Gastrocnemius medialis (tissue), 4 donors: ENCODE measurements at regions of chr11 and their contacts with region 1.

Region 1: DNA sequence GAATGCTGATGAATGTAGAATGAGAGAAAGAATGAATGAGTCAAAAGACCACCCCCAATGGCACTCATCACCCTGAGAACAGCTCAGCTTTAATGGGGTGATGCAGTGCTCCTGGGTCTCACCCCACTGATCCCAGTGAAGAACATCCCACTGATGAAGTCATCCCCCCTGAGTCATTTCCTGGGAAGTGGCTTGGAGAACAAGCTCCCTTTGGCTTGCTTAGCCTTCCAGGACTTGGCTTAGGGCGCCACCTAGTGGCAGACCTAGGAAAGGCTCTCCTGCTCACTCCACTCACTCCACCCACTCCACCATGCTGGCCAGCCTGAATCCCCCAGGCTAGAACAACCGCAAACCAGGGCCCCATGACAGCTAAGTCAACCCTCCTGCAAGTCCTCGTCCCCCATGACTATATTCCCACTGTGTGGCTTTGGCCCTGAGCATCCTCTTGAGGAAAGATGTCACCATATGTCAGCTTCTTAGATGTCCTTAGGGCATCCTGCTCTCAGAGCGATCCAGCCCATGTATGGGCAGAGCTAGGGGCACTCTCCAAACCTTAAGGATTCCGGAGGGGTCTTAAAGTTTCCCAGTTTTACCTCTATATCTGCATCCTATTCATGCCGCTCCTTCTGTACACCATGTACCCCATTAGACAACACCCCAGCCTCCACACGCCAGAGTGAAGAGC is 17.8 kb upstream of the TMPRSS13 start:
- DNase-seq: peak; percentile 62 to 76
- ATAC-seq: peak; percentile 94 to 96
- H3K4me3 ChIP-seq: no peak overlapping the region
- H3K27ac ChIP-seq: no peak overlapping the region
- H3K4me1 ChIP-seq: peaks cover 0 to 2% of the 10 kb centered on the region in 2 donors
- H3K27me3 ChIP-seq: peaks cover 0 to 3% (median 0%) of the 10 kb centered on the region in 3 donors
- CTCF ChIP-seq: peak; percentile 88 to 97 (median 94)
- POLR2A ChIP-seq: no peak

Region 2: DNA sequence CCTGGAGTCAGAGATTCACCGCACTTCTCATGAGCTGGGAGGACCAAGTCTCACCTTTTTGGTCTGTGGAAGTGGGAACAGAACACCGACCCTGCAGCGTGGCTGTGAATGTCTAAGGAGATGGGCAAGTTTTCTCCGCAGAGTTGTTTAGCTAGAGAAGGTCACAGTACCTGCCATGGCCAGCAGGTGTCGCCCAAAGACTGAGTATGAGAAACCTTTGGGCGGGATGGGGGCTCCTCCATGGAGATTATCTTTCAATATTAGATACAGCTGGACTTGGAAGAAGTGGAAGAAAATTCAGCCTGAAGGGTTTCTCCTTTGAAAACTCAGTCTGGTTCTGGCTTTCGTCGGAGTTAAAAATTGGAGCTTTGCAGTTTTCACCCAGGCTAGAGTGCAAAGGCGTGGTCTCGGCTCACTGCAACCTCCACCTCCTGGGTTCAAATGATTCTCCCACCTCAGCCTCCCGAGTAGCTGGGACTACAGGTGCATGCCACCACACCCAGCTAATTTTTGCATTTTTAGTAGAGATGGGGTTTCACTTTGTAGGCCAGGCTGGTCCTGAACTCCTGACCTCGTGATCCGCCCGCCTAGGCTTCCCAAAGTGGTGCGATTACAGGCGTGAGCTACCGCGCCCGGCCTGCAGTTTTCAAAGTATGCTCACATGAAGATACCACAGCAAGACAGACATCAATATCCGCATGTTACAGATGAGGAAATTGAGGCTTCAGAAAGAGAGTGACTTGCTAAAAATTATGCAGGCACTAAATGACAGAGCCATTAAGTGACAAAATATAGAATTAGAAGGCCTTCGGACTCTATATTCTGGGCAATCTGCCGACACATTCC is 139.3 kb before region 1 on chr11:
- in situ Hi-C with region 1: loop called in 3 of 4 experiments (anchors 5 to 10 kb)
- intact Hi-C with region 1: loop called (anchors 1 kb)
- DNase-seq: peak in 1 of 2 donors; percentile 57
- ATAC-seq: peak; percentile 68 to 74
- H3K4me3 ChIP-seq: no peak overlapping the region
- H3K27ac ChIP-seq: no peak overlapping the region
- H3K4me1 ChIP-seq: no peaks in the 10 kb centered on the region
- H3K27me3 ChIP-seq: peaks cover 0 to 11% (median 0%) of the 10 kb centered on the region in 3 donors
- CTCF ChIP-seq: peak; percentile 83 to 89 (median 87)
- POLR2A ChIP-seq: no peak

Region 3: GRCh38 chr11:117979481-117980211 is 32.7 kb after region 1 on chr11:
- in situ Hi-C with region 1: no loop called
- intact Hi-C with region 1: no loop called
- DNase-seq: no peak
- ATAC-seq: no peak
- H3K4me3 ChIP-seq: no peak overlapping the region
- H3K27ac ChIP-seq: no peak overlapping the region
- H3K4me1 ChIP-seq: no peaks in the 10 kb centered on the region
- H3K27me3 ChIP-seq: peaks cover 0 to 5% (median 3%) of the 10 kb centered on the region in 3 donors
- CTCF ChIP-seq: no peak
- POLR2A ChIP-seq: no peak

Region 4: DNA sequence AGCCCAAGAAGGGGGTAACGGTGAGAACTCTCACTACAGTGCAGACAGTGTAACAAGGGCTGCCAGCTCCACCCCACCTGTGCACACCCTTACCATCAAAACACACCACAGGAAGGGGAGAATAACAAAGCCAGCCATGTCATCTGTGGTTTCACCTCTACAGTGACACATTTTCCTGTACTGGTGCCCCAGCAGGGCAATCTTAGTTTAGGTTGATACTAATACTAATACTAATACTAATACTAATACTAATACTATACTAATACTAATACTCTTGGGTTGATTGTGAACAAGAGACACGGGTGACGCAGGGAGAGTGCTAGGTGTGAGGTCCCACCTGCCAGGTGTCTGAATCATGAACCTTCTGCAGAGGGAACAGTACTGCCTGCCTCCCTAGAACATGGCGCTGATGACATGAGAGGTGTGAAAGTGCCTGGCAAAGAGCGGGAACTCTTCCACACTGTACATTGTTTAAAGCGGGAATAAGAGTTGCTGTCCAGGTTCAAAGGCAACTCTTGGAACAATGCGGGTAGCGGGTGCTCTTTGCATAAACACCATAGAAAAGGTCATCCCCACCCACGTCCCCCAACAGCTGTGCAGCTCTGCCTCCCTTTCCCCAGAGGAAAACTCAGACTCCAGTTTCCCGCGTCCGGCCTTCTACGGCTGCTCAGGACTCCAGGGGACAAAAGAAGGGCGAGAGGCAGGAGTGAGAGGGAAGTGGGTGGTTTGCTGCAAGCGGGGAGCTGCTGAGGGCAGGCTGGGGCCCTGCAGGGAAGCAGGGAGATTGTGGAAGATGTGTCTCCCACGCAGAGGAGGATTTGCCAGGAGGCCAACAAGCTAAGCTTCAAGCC is 104.9 kb after region 1 on chr11:
- in situ Hi-C with region 1: loop called in 1 of 4 experiments (anchors 10 kb)
- intact Hi-C with region 1: loop called (anchors 10 kb)
- DNase-seq: no peak
- ATAC-seq: no peak
- H3K4me3 ChIP-seq: no peak overlapping the region
- H3K27ac ChIP-seq: no peak overlapping the region
- H3K4me1 ChIP-seq: no peaks in the 10 kb centered on the region
- H3K27me3 ChIP-seq: no peaks in the 10 kb centered on the region
- CTCF ChIP-seq: no peak
- POLR2A ChIP-seq: no peak